Activated CD4-positive, alpha-beta T cell treated with anti-CD3 and anti-CD28 coated beads, Interleukin-2, amount 10 ng/mL, durations not matched to agents 24 days and 14 days (primary cell): ENCODE measurements at regions of chr2 and their contacts with region 1.

Region 1: DNA sequence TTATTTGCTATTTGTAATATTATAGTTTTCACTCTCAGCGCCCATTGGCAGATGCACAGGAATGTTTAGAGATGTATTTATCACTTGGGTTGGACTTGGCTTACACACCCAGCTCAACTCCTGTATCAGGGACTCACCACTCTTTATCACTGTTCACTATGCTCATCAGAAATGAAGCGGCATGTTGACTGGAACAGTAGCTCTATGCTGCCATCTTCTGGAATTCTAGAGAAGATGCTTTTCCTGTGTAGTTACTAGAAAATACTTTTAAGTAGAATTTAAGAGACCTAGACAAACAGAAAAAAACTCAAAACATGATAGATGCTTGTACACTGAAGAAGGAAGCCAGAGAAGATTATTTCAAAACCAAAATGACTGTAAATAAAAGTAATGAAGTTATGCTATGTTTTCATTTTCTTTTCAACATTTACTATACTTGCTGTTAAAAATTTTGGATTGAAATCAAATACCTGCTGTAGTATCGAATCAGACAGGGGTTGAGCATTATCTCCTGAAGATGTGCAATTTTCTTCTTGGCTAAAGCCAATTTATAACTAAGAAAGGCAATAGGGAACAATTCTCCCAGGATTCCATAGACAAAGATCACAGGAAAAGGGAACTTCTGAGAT is 47.4 kb upstream of the NXPH2 start:
- DNase-seq: peak; percentile 71
- H3K4me3 Mint-ChIP-seq: no peak overlapping the region
- H3K27ac Mint-ChIP-seq: no peak overlapping the region
- H3K4me1 Mint-ChIP-seq: no peaks in the 10 kb centered on the region
- H3K27me3 Mint-ChIP-seq: no peaks in the 10 kb centered on the region

Region 2: DNA sequence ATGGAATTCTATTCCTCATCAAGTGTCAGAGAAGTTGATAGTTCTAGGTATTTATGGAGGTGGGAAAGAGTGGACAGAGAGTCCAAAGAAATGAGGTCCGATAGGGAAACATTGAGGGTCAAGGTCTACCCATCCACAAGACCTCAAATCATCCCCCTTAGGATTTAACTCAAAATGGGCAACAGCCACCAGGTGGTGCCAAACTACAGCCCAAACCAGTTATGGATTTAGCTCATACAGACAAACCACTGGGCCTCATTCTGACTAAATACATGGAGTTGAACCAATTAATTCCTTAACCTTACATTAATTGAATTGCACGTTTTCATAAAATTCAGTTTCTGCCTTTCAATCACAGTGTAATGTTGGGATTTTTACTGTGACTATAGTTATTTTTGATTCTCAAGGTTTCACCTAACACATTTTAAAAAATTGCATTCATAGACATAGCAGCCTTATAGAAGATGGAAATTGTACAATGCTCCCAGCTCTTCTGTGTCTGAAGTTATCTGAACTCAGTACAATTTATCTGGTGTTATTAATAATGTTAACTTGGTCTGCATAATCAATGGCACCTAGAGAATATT is 961.5 kb before region 1 on chr2:
- intact Hi-C with region 1: loop called (anchors 1 kb)
- DNase-seq: peak; percentile 76
- H3K4me3 Mint-ChIP-seq: no peak overlapping the region
- H3K27ac Mint-ChIP-seq: no peak overlapping the region
- H3K4me1 Mint-ChIP-seq: no peaks in the 10 kb centered on the region
- H3K27me3 Mint-ChIP-seq: no peaks in the 10 kb centered on the region

Region 3: GRCh38 chr2:137910641-137911040 is 916.9 kb before region 1 on chr2:
- intact Hi-C with region 1: loop called (anchors 2 kb)
- DNase-seq: no peak
- H3K4me3 Mint-ChIP-seq: no peak overlapping the region
- H3K27ac Mint-ChIP-seq: no peak overlapping the region
- H3K4me1 Mint-ChIP-seq: no peaks in the 10 kb centered on the region
- H3K27me3 Mint-ChIP-seq: no peaks in the 10 kb centered on the region

Region 4: DNA sequence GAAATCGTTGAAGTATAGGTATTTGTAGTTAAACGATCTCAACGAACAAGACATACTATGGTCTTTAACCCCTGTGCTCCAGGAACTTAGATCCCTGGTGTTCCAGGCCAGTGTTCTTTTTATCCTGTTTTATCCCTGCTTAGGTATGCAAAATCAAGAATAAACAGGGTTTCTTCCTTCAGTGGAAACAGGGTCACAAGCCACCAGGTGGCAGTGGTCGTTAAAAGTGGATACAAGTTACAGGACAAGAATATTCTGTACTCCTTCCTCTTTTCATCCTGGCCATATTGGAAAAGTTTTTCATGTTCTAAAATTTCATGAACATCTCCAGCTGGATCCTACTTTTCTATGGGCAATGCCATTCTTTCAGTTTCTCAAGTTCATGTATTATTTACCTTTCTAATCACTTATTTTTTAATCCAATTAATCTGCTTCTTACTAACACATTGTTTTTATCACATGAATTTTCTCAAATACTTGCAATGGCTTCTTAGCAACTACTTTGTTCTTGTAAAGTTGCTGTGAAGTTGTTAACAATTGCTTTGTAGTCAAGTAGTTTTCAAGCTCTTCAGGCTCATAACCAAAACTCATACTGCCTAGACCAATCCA is 879.7 kb before region 1 on chr2:
- intact Hi-C with region 1: loop called (anchors 5 kb)
- DNase-seq: peak; percentile 67
- H3K4me3 Mint-ChIP-seq: no peak overlapping the region
- H3K27ac Mint-ChIP-seq: no peak overlapping the region
- H3K4me1 Mint-ChIP-seq: peaks cover 9% of the 10 kb centered on the region
- H3K27me3 Mint-ChIP-seq: no peaks in the 10 kb centered on the region

Region 5: DNA sequence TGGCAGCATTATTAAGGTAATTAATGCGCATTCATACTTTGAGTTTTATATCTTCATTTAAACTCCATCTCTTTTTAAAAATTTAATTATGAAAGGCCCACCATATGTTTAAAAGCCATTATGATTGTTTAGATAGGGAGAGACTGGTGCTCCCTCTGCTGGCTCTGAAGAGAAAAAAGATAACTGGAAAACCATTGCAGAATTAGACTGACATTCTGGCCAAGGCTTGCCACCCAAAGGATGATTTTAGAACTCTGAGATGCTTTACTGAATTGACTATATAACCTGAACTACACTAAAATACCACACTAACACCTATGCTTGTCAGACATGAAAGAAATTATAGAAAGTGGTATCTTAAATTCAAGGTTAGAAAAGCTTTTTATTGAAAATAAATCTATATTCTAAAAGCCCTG is 453.5 kb before region 1 on chr2:
- intact Hi-C with region 1: loop called (anchors 2 kb)
- DNase-seq: no peak
- H3K4me3 Mint-ChIP-seq: no peak overlapping the region
- H3K27ac Mint-ChIP-seq: no peak overlapping the region
- H3K4me1 Mint-ChIP-seq: no peaks in the 10 kb centered on the region
- H3K27me3 Mint-ChIP-seq: no peaks in the 10 kb centered on the region

Region 6: GRCh38 chr2:139067874-139068273 is 240.3 kb after region 1 on chr2:
- intact Hi-C with region 1: no loop called
- DNase-seq: no peak
- H3K4me3 Mint-ChIP-seq: no peak overlapping the region
- H3K27ac Mint-ChIP-seq: no peak overlapping the region
- H3K4me1 Mint-ChIP-seq: no peaks in the 10 kb centered on the region
- H3K27me3 Mint-ChIP-seq: no peaks in the 10 kb centered on the region